ENCODE measurements at regions of chrX and their contacts with region 1.

Region 1: DNA sequence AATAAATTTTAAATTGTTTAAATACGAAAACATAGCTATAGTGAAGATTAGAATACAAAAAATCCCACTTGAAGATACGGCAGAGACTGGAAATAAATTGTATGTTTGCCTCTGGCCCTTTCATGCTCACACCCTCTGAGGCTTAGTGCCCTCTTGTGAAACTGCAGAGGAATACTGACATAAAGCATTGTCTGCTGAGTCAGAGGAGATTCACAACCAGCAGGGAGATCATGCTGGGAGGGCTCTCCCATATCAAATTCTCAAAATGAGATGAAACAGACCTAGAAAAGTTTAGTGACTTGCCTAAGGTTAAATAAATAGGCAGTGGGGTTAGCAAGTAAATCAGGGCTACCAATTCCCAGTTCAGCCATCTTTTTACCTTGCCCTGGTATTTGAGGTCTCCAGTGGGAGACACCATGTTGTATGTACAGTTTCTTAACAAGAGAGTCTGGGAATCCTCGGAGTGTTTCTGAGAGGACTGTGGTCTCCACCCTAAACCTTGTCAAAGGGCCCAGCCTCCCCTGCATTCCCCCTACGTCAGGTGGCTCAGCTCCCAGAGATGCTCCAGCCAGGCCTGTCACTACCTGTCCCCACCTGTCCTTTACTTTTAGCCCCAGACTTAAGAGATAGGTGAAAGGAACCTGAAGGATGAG is 581.4 kb upstream of the DIPK2B start:
- DNase-seq: peak in 2 of 9 experiments; percentile 22 to 41
- ATAC-seq: peak; percentile 42
- H3K4me3 ChIP-seq: no peak overlapping the region
- H3K4me3 Mint-ChIP-seq: no peak overlapping the region
- H3K27ac ChIP-seq: no peak overlapping the region
- H3K27ac Mint-ChIP-seq: no peak overlapping the region
- H3K4me1 ChIP-seq: no peaks in the 10 kb centered on the region
- H3K4me1 Mint-ChIP-seq: no peaks in the 10 kb centered on the region
- H3K27me3 ChIP-seq: no peaks in the 10 kb centered on the region
- H3K27me3 Mint-ChIP-seq: no peaks in the 10 kb centered on the region
- CTCF ChIP-seq: no peak

Region 2: GRCh38 chrX:45749375-45749774 is 32.7 kb before region 1 on chrX:
- CTCF ChIA-PET with region 1: no interaction called
- POLR2A ChIA-PET with region 1: no interaction called
- intact Hi-C with region 1: loop called in 1 of 2 experiments (anchors 5 kb)
- DNase-seq: peak in 2 of 9 experiments; percentile 16 to 43
- ATAC-seq: peak; percentile 46
- H3K4me3 ChIP-seq: no peak overlapping the region
- H3K4me3 Mint-ChIP-seq: no peak overlapping the region
- H3K27ac ChIP-seq: no peak overlapping the region
- H3K27ac Mint-ChIP-seq: no peak overlapping the region
- H3K4me1 ChIP-seq: peaks cover 22% of the 10 kb centered on the region
- H3K4me1 Mint-ChIP-seq: peaks cover 12% of the 10 kb centered on the region
- H3K27me3 ChIP-seq: no peaks in the 10 kb centered on the region
- H3K27me3 Mint-ChIP-seq: no peaks in the 10 kb centered on the region
- CTCF ChIP-seq: no peak

Region 3: GRCh38 chrX:45889471-45889870 is 107.4 kb after region 1 on chrX:
- CTCF ChIA-PET with region 1: no interaction called
- POLR2A ChIA-PET with region 1: no interaction called
- intact Hi-C with region 1: no loop called
- DNase-seq: no peak
- ATAC-seq: no peak
- H3K4me3 ChIP-seq: no peak overlapping the region
- H3K4me3 Mint-ChIP-seq: no peak overlapping the region
- H3K27ac ChIP-seq: no peak overlapping the region
- H3K27ac Mint-ChIP-seq: no peak overlapping the region
- H3K4me1 ChIP-seq: no peaks in the 10 kb centered on the region
- H3K4me1 Mint-ChIP-seq: no peaks in the 10 kb centered on the region
- H3K27me3 ChIP-seq: no peaks in the 10 kb centered on the region
- H3K27me3 Mint-ChIP-seq: no peaks in the 10 kb centered on the region
- CTCF ChIP-seq: no peak

Measured in CD8-positive, alpha-beta T cell (primary cell).